Dendritic cell treated with granulocyte-macrophage colony-stimulating factor and Interleukin-4, amounts not matched to agents 40 ng/mL and 50 ng/mL, for 4 days (primary cell): ENCODE measurements at regions of chr13 and their contacts with region 1.

Region 1: GRCh38 chr13:113863436-113864272 is at the start of gene GAS6:
- H3K4me3 Mint-ChIP-seq: peak within 1 kb of the TSS; percentile 92
- H3K27ac Mint-ChIP-seq: peak within 1 kb of the TSS; percentile 93
- H3K4me1 Mint-ChIP-seq: peaks cover 58% of the 10 kb centered on the region
- H3K27me3 Mint-ChIP-seq: peaks cover 29% of the 10 kb centered on the region

Region 2: DNA sequence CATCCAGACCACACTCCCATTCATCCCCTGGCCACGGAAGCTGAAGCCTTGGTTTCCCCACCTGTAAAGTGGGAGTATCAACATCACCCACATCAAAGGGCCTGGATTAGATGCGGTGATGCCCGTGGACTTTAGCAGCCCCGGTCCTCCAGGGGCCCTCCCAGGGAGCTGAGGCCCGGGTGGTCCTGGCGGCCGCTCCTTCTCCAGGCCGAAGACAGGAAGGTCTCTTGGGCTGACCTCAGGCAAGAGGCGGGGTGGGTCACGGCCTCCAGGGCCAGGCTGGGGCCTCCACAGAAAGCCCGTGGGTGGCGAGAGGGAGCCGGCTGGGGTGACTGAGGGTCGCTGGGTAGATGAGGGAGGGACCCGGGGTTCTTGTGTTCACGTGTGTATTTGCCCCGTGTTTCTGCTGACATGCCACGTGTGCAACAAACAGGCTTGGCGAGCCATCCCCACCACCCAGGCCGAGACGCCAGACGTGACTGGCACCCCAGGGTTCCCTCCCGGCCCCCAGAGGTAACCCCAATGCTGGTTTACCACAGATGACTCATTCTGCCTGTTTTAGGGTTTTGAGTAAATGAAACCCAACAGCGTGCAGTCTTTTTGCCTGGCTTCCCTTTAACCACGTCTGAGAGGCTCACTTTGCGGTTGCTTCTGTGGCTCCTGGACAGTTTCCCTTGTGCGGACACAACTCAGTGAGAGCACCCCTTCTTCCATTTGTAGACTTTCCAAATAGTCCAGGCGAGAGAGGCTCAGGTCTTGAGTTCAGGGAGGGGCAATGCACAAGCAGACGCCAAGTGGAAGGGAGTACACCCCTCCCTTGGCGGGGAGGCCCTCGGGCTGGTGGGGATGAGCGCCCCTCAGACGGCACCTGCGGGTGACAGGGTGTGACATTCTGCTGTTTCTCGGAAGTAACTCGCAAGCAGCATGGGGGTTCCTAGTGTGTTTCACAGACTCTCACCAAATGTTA is 67.3 kb after region 1 on chr13:
- intact Hi-C with region 1: loop called (anchors 10 kb)
- H3K4me3 Mint-ChIP-seq: no peak overlapping the region
- H3K27ac Mint-ChIP-seq: no peak overlapping the region
- H3K4me1 Mint-ChIP-seq: peaks cover 11% of the 10 kb centered on the region
- H3K27me3 Mint-ChIP-seq: peaks cover 87% of the 10 kb centered on the region